ENCODE measurements at regions of chr21 and their contacts with region 1.

Region 1: GRCh38 chr21:34603002-34603709 is 11.8 kb downstream of the RCAN1 start:
- DNase-seq: peak; percentile 66 to 89
- H3K4me3 ChIP-seq: no peak overlapping the region
- H3K27ac ChIP-seq: no peak overlapping the region
- H3K4me1 ChIP-seq: no peaks in the 10 kb centered on the region; a peak in 1 of 7 replicates
- H3K27me3 ChIP-seq: no peaks in the 10 kb centered on the region
- CTCF ChIP-seq: peak; percentile 81 to 87 (median 83)
- EP300 ChIP-seq: no peak
- POLR2A ChIP-seq: no peak
- RAD21 ChIP-seq: peak; percentile 88

Region 2: GRCh38 chr21:32712043-32712442 is 1891.1 kb before region 1 on chr21:
- CTCF ChIA-PET with region 1: no interaction called
- POLR2A ChIA-PET with region 1: no interaction called
- DNase-seq: no peak
- H3K4me3 ChIP-seq: no peak overlapping the region
- H3K27ac ChIP-seq: no peak overlapping the region
- H3K4me1 ChIP-seq: peaks cover 0 to 2% (median 1%) of the 10 kb centered on the region in 4 experiments; a peak in 1 of 7 replicates
- H3K27me3 ChIP-seq: no peaks in the 10 kb centered on the region
- CTCF ChIP-seq: no peak
- EP300 ChIP-seq: no peak
- POLR2A ChIP-seq: no peak
- RAD21 ChIP-seq: no peak

Region 3: DNA sequence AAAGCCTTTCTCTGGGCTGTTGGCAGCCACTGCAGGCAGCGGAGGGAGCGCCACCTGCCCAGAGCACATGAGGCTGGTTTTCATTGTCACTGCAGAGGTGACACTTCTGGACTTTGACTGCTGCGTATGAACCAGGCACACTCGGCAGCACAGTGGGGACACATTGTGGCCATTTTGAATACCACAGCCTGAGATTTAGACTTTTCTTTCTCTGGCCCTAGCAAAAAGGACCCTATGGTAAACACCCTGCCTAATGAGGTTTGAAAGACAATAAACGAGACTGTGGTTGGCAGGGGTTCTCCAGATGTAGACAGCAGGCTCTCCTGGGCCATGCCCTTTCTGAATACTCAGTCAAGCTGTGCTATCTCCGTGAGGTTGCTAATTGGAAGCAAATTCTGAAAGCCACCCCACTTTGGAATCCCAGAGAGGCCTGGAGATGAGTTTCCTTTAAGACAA is 251.3 kb before region 1 on chr21:
- CTCF ChIA-PET with region 1: no interaction called
- POLR2A ChIA-PET with region 1: no interaction called
- DNase-seq: no peak
- H3K4me3 ChIP-seq: no peak overlapping the region
- H3K27ac ChIP-seq: no peak overlapping the region
- H3K4me1 ChIP-seq: no peaks in the 10 kb centered on the region; a peak in 1 of 7 replicates
- H3K27me3 ChIP-seq: no peaks in the 10 kb centered on the region; a peak in 1 of 7 replicates
- CTCF ChIP-seq: peak; percentile 45 to 56 (median 51)
- EP300 ChIP-seq: no peak
- POLR2A ChIP-seq: no peak
- RAD21 ChIP-seq: peak; percentile 80 to 82

Region 4: DNA sequence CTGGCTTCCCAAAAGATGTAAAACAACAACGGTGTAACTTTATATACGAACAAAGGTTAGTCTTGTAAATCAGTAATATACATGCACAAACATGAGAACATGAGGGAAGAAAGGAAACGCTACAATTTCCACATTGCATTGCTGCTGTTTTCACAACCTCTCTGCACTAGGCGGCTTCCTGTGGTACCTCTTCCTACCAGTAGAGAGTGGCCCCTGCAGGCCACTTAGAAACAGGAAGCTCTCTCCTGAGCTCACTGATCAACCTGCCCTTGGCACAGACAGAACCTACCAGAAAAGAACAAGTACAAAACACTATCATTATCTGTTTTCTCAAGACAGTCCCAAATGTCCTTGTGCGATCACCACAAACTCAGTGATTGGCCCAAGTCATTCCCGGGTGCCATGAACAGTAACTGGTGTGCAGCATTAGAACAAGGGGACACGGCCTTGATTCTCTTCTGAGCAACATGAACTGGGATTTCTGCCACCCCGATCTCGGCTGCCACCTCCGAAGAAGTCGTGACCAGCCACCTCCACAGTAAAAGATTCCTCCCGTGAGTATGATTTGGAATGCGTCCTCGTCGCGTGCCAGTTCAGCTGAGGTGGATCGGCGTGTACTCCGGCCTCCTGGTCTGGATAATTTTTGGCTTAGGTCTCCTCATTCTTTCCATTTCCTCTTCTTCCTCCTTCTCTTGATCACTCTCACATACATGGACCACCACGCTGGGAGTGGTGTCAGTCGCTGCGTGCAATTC is 85.5 kb before region 1 on chr21:
- CTCF ChIA-PET with region 1: interaction called, 13 read pairs
- POLR2A ChIA-PET with region 1: no interaction called
- DNase-seq: no peak
- H3K4me3 ChIP-seq: no peak overlapping the region
- H3K27ac ChIP-seq: no peak overlapping the region
- H3K4me1 ChIP-seq: peaks cover 0 to 4% (median 0%) of the 10 kb centered on the region in 4 experiments; a peak in 2 of 7 replicates
- H3K27me3 ChIP-seq: no peaks in the 10 kb centered on the region
- CTCF ChIP-seq: peak; percentile 32 to 76 (median 63)
- EP300 ChIP-seq: no peak
- POLR2A ChIP-seq: no peak
- RAD21 ChIP-seq: peak; percentile 53 to 68

Region 5: DNA sequence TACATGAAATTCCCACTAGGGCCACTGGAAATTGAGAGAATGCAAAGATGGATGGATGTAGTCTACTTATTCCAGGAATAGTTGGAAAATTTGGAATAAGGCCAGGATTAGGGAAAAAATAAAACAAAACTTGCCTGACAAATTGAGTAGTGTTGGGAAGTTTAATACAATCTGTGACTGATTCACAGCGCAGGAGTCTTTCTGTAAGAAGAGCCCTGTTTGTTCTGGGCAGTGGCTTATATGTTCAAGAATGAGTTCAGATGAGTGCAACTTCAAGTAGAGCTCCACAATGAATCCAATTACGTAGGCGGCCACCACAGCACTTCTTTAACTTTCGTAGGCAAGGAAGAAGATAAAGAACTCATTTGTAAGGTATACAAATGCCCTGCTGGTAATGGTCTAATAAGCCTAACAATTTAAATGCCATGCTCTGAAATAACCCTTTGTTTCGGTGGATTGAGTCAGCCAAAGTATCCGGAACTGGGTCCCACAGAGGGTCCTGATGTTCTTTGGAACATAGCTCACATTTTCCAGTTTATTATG is 44.0 kb before region 1 on chr21:
- CTCF ChIA-PET with region 1: interaction called, 10 read pairs
- POLR2A ChIA-PET with region 1: no interaction called
- DNase-seq: no peak
- H3K4me3 ChIP-seq: no peak overlapping the region
- H3K27ac ChIP-seq: no peak overlapping the region
- H3K4me1 ChIP-seq: no peaks in the 10 kb centered on the region
- H3K27me3 ChIP-seq: no peaks in the 10 kb centered on the region
- CTCF ChIP-seq: no peak
- EP300 ChIP-seq: no peak
- POLR2A ChIP-seq: no peak
- RAD21 ChIP-seq: no peak

Region 6: GRCh38 chr21:34592120-34592955 is 10.8 kb before region 1 on chr21:
- CTCF ChIA-PET with region 1: interaction called, 36 read pairs
- POLR2A ChIA-PET with region 1: no interaction called
- DNase-seq: no peak
- H3K4me3 ChIP-seq: no peak overlapping the region
- H3K27ac ChIP-seq: no peak overlapping the region
- H3K4me1 ChIP-seq: no peaks in the 10 kb centered on the region
- H3K27me3 ChIP-seq: no peaks in the 10 kb centered on the region
- CTCF ChIP-seq: no peak
- EP300 ChIP-seq: no peak
- POLR2A ChIP-seq: no peak
- RAD21 ChIP-seq: no peak

Region 7: GRCh38 chr21:34630536-34631143 is 27.5 kb after region 1 on chr21:
- CTCF ChIA-PET with region 1: interaction called, 19 read pairs
- POLR2A ChIA-PET with region 1: no interaction called
- DNase-seq: no peak
- H3K4me3 ChIP-seq: no peak overlapping the region
- H3K27ac ChIP-seq: no peak overlapping the region
- H3K4me1 ChIP-seq: no peaks in the 10 kb centered on the region
- H3K27me3 ChIP-seq: no peaks in the 10 kb centered on the region
- CTCF ChIP-seq: peak in 2 of 3 experiments; percentile 76 to 80; a peak in 3 of 4 replicates
- EP300 ChIP-seq: no peak
- POLR2A ChIP-seq: no peak
- RAD21 ChIP-seq: peak; percentile 95